ENCODE measurements at regions of chr10 and their contacts with region 1.

Region 1: GRCh38 chr10:132142411-132143161 is 44.2 kb upstream of the DPYSL4 start:
- DNase-seq: no peak
- ATAC-seq: peak; percentile 66 to 74
- H3K4me3 ChIP-seq: no peak overlapping the region
- H3K27ac ChIP-seq: no peak overlapping the region
- H3K4me1 ChIP-seq: no peaks in the 10 kb centered on the region
- H3K27me3 ChIP-seq: no peaks in the 10 kb centered on the region
- CTCF ChIP-seq: peak; percentile 49 to 91 (median 83)
- POLR2A ChIP-seq: no peak

Region 2: GRCh38 chr10:132036153-132036886 is 106.3 kb before region 1 on chr10:
- in situ Hi-C with region 1: no loop called
- intact Hi-C with region 1: loop called (anchors 1 kb)
- DNase-seq: no peak
- ATAC-seq: peak; percentile 39 to 57
- H3K4me3 ChIP-seq: peak overlapping the region; percentile 46 to 58 (median 50)
- H3K27ac ChIP-seq: peak overlapping the region in 1 of 4 donors; percentile 66
- H3K4me1 ChIP-seq: peaks cover 0 to 5% of the 10 kb centered on the region in 2 donors
- H3K27me3 ChIP-seq: peaks cover 8 to 15% (median 10%) of the 10 kb centered on the region in 3 donors
- CTCF ChIP-seq: no peak
- POLR2A ChIP-seq: no peak

Region 3: DNA sequence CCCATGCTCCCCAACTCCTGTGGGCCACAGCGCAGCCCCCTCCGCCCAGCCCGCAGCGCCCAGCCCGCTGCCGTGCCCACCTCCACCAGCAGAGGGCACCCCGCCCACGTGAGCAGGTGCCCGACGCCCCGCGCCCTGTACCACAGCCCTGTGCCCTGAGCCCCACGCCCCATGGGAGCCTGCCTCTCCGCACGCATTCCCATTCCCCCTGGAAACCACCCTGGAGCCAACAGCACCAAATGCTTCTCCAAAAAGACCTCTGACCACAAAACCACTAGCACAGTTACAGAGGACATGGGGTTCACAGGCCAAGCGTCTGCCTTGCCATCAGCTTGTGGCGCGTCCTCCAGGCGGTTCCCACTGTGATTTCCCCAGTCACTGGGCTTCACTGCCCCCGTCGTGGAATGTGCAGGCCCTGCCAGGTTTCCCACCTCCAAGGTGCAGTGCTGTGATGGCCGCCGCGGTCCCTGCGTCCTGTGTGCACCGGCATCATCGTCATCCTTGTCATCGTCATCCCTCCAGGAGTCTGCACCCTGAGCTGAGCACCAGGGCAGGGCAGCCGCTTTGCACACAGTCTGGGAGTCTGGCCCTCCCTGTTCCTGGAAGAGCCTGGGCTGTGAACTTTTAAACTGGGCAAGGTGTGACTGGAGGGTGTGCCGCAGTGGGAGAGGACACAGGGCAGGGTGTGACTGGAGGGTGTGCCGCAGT is 316.2 kb after region 1 on chr10:
- in situ Hi-C with region 1: no loop called
- intact Hi-C with region 1: no loop called
- DNase-seq: no peak
- ATAC-seq: peak; percentile 49 to 61
- H3K4me3 ChIP-seq: no peak overlapping the region
- H3K27ac ChIP-seq: no peak overlapping the region
- H3K4me1 ChIP-seq: peaks cover 13 to 16% of the 10 kb centered on the region in 2 donors
- H3K27me3 ChIP-seq: no peaks in the 10 kb centered on the region
- CTCF ChIP-seq: peak; percentile 93 to 99 (median 98)
- POLR2A ChIP-seq: no peak